Head of caudate nucleus (tissue), 42 donors: ENCODE measurements at regions of chr3 and their contacts with region 1.

Region 1: GRCh38 chr3:47475570-47476329 is at the start of gene SCAP:
- DNase-seq: peak; percentile 76 to 97 (median 90)

Region 2: GRCh38 chr3:47128137-47128536 is 347.6 kb before region 1 on chr3:
- intact Hi-C with region 1: no loop called
- DNase-seq: no peak

Region 3: GRCh38 chr3:47380601-47381316 is 95.0 kb before region 1 on chr3 and contains the start of gene PTPN23:
- intact Hi-C with region 1: loop called (anchors 5 kb)
- DNase-seq: peak; percentile 93 to 100 (median 98)

Region 4: GRCh38 chr3:47420511-47421484 is 55.0 kb before region 1 on chr3:
- intact Hi-C with region 1: loop called (anchors 5 kb)
- DNase-seq: peak; percentile 68 to 96 (median 89)

Region 5: DNA sequence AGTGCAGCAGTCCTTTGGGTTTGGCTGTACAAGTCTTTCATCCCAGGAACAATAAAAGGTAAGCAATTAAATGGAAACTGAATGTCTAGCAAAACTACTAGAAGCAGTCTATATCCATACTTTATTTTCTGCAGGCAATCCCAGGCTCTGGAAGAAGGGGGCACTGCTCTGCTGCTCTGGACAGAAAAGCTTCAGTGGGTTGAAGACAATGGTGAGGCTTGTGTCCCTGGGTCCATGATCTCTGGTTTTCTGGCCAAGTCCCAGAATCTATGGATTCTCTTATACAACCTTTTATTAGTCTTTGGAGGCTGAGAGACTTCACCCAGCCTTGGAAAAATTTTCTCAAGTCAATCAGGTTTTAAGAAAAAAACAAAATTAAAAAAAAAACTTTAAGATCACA is 35.6 kb before region 1 on chr3:
- intact Hi-C with region 1: loop called (anchors 5 kb)
- DNase-seq: peak in 33 of 42 donors; percentile 25 to 82 (median 59)

Region 6: GRCh38 chr3:47513125-47513929 is 37.6 kb after region 1 on chr3 and contains the start of gene ELP6:
- intact Hi-C with region 1: loop called (anchors 5 kb)
- DNase-seq: peak; percentile 92 to 99 (median 97)

Region 7: GRCh38 chr3:47523310-47524073 is 47.7 kb after region 1 on chr3:
- intact Hi-C with region 1: no loop called
- DNase-seq: no peak

Region 8: GRCh38 chr3:47612178-47612577 is 136.4 kb after region 1 on chr3:
- intact Hi-C with region 1: no loop called
- DNase-seq: no peak

Region 9: DNA sequence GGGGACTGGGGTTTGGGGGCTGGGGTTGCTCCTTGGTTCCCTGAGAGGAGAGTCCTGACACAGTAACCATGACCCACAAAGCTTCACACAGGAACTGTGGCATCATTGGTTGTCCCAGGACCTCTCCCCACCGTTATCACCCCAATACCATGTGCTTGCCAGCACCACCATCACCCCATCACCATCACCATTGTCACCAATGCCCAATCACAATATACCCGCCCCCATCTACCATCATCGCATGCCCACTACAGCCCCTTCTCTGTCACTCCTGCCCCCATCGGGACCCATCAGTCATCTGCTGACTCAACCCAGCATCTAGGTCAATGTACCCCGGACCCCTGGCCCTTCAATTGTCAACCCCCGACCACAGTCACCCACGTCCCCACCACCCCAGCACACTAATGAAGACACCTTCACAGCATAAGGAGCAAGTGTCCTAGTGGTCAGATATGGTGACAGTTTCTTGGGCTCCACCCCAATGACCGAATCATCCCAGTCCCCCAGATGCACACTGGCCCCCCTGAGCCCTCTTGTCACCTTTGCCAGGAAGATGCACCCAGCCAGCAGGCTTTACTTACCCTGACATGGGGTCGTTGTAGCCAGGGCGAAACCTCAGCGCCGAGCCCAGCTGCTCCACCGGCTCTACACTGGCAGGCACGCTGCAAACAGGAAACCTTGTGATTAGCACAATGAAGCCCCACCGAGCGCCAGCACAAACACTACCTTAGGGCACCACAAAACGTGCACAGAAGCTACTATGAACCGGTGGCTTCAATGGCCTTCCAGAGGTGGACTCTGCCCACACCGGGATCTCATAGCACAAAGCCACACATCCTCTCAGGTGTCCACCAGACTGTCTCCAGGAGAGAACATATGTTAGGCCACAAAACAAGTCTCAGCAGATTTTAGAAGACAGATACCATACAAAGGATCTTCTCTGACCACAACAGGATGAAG is 1003.1 kb after region 1 on chr3:
- intact Hi-C with region 1: no loop called
- DNase-seq: no peak